ENCODE measurements at regions of chr1 and their contacts with region 1.

Region 1: GRCh38 chr1:200620273-200621131 is at the start of gene KIF14:
- DNase-seq: peak; percentile 89 to 95 (median 91)
- H3K4me3 ChIP-seq: peak within 1 kb of the TSS; percentile 69 to 83
- H3K4me3 Mint-ChIP-seq: peak within 1 kb of the TSS; percentile 95 to 99 (median 98)
- H3K27ac ChIP-seq: peak within 1 kb of the TSS; percentile 39
- H3K27ac Mint-ChIP-seq: peak within 1 kb of the TSS; percentile 93 to 97 (median 96)
- H3K4me1 ChIP-seq: peaks cover 24% of the 10 kb centered on the region
- H3K4me1 Mint-ChIP-seq: peaks cover 6 to 23% (median 9%) of the 10 kb centered on the region in 4 donors
- H3K27me3 ChIP-seq: no peaks in the 10 kb centered on the region
- H3K27me3 Mint-ChIP-seq: no peaks in the 10 kb centered on the region
- total RNA-seq, gene KIF14: 0.06 TPM in 1 of 2 experiments, not detected in the other

Region 2: GRCh38 chr1:200669314-200670241 is 49.1 kb after region 1 on chr1 and contains the start of gene DDX59:
- CTCF ChIA-PET with region 1: interaction called, 17 read pairs
- POLR2A ChIA-PET with region 1: interaction called, 20 read pairs
- intact Hi-C with region 1: loop called (anchors 1 kb)
- DNase-seq: peak; percentile 85 to 92 (median 87)
- H3K4me3 ChIP-seq: peak within 1 kb of the TSS; percentile 57 to 95
- H3K4me3 Mint-ChIP-seq: peak within 1 kb of the TSS; percentile 95 to 99 (median 98)
- H3K27ac ChIP-seq: peak within 1 kb of the TSS; percentile 98
- H3K27ac Mint-ChIP-seq: peak within 1 kb of the TSS; percentile 95 to 99 (median 98)
- H3K4me1 ChIP-seq: peaks cover 39% of the 10 kb centered on the region
- H3K4me1 Mint-ChIP-seq: peaks cover 29 to 57% (median 41%) of the 10 kb centered on the region in 4 donors
- H3K27me3 ChIP-seq: no peaks in the 10 kb centered on the region
- H3K27me3 Mint-ChIP-seq: no peaks in the 10 kb centered on the region
- total RNA-seq, gene DDX59: 37.0 to 37.5 TPM

Region 3: GRCh38 chr1:200794506-200795065 is 174.1 kb after region 1 on chr1:
- CTCF ChIA-PET with region 1: interaction called, 159 read pairs
- POLR2A ChIA-PET with region 1: no interaction called
- intact Hi-C with region 1: no loop called
- DNase-seq: no peak
- H3K4me3 ChIP-seq: no peak overlapping the region
- H3K4me3 Mint-ChIP-seq: no peak overlapping the region
- H3K27ac ChIP-seq: no peak overlapping the region
- H3K27ac Mint-ChIP-seq: no peak overlapping the region
- H3K4me1 ChIP-seq: no peaks in the 10 kb centered on the region
- H3K4me1 Mint-ChIP-seq: no peaks in the 10 kb centered on the region
- H3K27me3 ChIP-seq: no peaks in the 10 kb centered on the region
- H3K27me3 Mint-ChIP-seq: no peaks in the 10 kb centered on the region

Region 4: DNA sequence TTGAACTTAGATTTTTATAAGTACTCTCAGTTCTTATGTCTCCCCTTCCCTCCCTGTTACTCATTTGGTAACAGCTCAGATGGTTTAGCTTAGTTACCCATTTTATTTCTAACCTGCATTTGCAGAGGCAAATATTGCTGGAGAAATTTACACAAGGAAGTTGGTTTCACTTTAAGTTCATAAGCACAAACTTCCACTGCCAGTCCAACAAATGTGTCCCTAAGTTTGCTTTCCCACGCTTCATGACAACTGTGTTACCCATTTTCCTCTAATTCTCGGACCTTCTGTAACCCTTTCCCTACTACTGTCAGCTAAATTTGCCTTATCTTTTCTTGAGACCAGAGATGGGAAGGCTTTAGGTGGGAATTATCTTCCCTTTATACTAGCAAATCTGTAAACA is 188.3 kb after region 1 on chr1:
- CTCF ChIA-PET with region 1: interaction called, 159 read pairs
- POLR2A ChIA-PET with region 1: no interaction called
- intact Hi-C with region 1: no loop called
- DNase-seq: no peak
- H3K4me3 ChIP-seq: no peak overlapping the region
- H3K4me3 Mint-ChIP-seq: no peak overlapping the region
- H3K27ac ChIP-seq: no peak overlapping the region
- H3K27ac Mint-ChIP-seq: peak overlapping the region in 1 of 7 donors; percentile 76
- H3K4me1 ChIP-seq: no peaks in the 10 kb centered on the region
- H3K4me1 Mint-ChIP-seq: no peaks in the 10 kb centered on the region
- H3K27me3 ChIP-seq: no peaks in the 10 kb centered on the region
- H3K27me3 Mint-ChIP-seq: no peaks in the 10 kb centered on the region

Region 5: DNA sequence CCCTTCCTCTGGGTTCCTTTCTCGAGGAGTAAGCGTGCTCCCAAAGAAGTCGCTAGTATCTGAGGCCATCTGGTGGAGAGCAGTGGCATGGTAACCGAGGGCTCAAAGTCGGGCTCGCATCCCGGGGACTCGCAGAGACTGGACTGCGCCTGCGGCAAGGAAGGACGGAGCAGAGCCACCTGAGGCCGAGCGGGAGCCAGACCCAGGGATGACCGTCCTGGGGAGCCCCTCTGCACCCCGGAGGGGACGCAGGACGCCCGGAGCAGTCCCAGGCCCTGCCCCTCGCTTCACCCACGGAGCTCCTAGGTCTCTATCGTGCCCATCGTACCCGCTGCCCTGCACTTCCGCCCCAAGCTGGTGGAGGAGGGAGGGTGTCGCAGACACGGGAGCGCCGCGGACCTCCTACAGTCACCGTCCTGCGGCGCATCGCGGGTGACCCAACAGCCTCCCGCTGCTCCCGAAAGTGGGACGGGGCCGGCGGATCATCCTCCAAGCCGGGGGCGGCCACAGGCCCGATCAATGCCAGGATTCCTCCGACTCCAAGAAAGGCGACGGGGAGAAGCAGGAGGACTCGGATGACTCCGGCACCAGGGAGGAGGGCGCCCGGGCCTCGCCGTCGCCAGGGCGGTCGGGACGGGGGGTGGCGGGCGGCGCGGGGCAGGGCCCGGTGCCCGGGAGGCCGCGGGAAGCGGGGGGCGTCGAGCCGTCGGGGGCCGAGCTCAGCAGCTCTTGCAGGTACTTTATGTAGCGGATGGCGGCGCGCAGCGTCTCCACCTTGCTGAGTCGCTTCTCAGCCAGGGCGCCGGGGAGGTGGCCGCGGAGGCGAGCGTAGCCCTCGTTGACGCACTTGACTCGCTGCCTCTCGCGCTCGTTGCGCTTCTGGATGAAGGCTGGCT is 494.0 kb after region 1 on chr1:
- CTCF ChIA-PET with region 1: interaction called, 4 read pairs
- POLR2A ChIA-PET with region 1: no interaction called
- intact Hi-C with region 1: loop called (anchors 10 kb)
- DNase-seq: peak; percentile 69 to 79 (median 74)
- H3K4me3 ChIP-seq: peak overlapping the region; percentile 57 to 65
- H3K4me3 Mint-ChIP-seq: peak overlapping the region; percentile 89 to 96 (median 92)
- H3K27ac ChIP-seq: peak overlapping the region; percentile 38
- H3K27ac Mint-ChIP-seq: peak overlapping the region; percentile 75 to 93 (median 89)
- H3K4me1 ChIP-seq: peaks cover 11% of the 10 kb centered on the region
- H3K4me1 Mint-ChIP-seq: peaks cover 3 to 22% (median 10%) of the 10 kb centered on the region in 4 donors
- H3K27me3 ChIP-seq: no peaks in the 10 kb centered on the region
- H3K27me3 Mint-ChIP-seq: no peaks in the 10 kb centered on the region

Measured in CD4-positive, alpha-beta memory T cell (primary cell).